PC-3 (cell line): ENCODE measurements at regions of chr10 and their contacts with region 1.

Region 1: GRCh38 chr10:9222917-9223316 is 1168.4 kb downstream of the GATA3 start:
- DNase-seq: no peak
- ATAC-seq: no peak
- H3K4me3 ChIP-seq: no peak overlapping the region
- H3K27ac ChIP-seq: no peak overlapping the region
- H3K4me1 ChIP-seq: no peaks in the 10 kb centered on the region
- H3K27me3 ChIP-seq: peaks cover 46% of the 10 kb centered on the region
- CTCF ChIP-seq: no peak

Region 2: DNA sequence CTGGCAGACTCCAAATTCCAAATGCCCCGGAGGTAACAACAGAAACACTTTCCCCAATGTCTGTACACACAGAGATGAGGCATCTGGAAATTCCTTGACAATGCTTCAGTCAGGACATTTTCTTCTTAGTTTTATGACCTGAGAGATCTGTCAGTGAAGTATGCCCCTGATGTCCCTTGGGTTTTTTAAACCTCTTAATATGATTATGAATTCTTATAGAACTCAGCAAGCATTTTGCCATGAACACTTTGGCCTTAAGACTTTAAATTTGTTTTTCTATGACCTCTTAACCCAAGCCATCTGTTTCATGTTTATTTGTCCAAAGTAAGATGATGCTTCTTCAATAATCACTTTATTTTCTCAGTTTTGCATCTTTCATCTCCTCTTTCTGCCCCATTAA is 37.8 kb after region 1 on chr10:
- CTCF ChIA-PET with region 1: no interaction called
- POLR2A ChIA-PET with region 1: no interaction called
- intact Hi-C with region 1: loop called (anchors 2 kb)
- DNase-seq: no peak
- ATAC-seq: no peak
- H3K4me3 ChIP-seq: no peak overlapping the region
- H3K27ac ChIP-seq: no peak overlapping the region
- H3K4me1 ChIP-seq: no peaks in the 10 kb centered on the region
- H3K27me3 ChIP-seq: peaks cover 10% of the 10 kb centered on the region
- CTCF ChIP-seq: no peak

Region 3: DNA sequence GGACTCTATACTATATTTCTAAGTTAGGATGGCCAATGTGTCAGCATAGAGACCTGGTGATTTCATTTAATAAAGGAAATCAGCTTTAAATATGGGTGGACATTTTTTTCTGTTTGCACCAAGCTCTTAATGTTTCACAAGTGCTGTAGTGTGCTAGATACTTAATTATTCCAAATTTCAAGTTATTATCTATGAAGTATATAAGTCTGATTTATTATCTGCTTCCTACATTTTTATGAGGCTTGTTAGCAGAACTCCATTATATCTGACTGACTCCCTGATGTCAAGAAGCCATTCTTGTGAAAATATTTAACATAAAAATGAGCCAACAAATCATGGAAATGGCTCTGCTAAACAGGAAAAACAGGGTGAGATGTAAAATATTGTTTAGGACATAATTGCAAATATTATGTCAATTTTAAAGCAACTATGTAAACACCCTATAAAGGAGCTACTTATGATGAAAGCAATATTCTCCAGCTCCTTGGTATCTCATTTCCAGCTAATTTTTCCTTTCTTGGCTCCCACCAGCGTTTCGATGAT is 246.8 kb after region 1 on chr10:
- CTCF ChIA-PET with region 1: no interaction called
- POLR2A ChIA-PET with region 1: no interaction called
- intact Hi-C with region 1: no loop called
- DNase-seq: no peak
- ATAC-seq: no peak
- H3K4me3 ChIP-seq: no peak overlapping the region
- H3K27ac ChIP-seq: no peak overlapping the region
- H3K4me1 ChIP-seq: no peaks in the 10 kb centered on the region
- H3K27me3 ChIP-seq: no peaks in the 10 kb centered on the region
- CTCF ChIP-seq: no peak